ENCODE measurements at regions of chr3 and their contacts with region 1.

Region 1: DNA sequence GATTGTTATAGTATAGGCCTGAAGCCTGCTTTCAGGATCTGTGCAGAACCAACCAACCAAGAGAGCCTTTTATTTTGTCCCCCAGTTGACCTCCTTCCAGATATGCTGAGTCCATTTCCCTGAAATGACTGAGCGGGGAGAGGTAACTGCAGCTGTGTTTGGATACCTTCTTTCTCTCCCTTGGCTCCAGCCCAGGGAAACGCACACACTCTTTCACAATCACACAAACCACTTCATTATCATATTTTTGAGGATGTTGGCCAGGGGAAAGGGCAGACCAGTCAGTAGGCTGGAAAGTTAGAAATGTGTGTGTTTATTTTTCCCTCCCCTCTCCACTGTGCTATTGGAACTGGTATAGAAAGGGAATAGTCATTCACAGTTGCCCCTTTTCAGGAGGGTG is 417.7 kb upstream of the TBL1XR1 start:
- DNase-seq: peak; percentile 85
- H3K4me3 Mint-ChIP-seq: no peak overlapping the region
- H3K27ac Mint-ChIP-seq: peak overlapping the region; percentile 28
- H3K4me1 Mint-ChIP-seq: peaks cover 69% of the 10 kb centered on the region
- H3K27me3 Mint-ChIP-seq: no peaks in the 10 kb centered on the region
- CTCF ChIP-seq: no peak

Region 2: DNA sequence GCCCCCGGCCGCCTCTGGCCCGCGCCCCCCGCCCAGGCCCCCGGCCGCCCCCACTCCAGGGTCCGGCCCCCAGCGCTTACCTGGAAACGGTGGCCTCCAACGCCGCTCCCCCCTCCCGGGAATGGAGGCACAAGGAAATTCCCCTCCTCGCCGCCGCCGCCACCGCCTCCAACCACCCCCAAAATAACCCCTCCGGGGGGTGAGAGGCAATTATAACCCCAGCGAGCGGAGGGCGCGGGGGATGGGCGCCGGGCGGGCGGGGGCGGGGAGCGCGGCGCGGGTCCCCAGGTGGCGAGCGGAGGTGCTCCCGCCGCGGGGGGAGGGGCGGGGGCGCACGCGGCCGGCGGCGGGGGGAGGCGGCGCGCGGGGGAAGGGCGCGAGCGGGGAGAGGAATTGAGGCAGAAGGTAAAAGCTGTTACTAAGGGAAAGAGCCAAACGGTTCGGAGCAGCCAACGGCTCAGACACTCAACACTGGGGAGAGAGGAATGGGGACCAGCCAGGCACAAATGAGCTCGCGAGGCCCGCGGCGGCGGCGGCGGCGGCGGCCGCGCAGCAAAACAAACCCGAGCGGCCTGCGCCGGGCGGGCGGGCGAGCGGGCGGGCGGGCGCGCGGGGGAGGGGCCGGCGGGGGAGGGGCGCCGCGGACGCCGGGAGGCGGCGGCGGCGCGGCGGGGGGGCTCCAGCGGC is 417.8 kb before region 1 on chr3 and contains the start of gene TBL1XR1:
- CTCF ChIA-PET with region 1: interaction called, 3 read pairs
- intact Hi-C with region 1: loop called (anchors 5 kb)
- DNase-seq: peak; percentile 94
- H3K4me3 Mint-ChIP-seq: peak within 1 kb of the TSS; percentile 70
- H3K27ac Mint-ChIP-seq: peak within 1 kb of the TSS; percentile 71
- H3K4me1 Mint-ChIP-seq: peaks cover 32% of the 10 kb centered on the region
- H3K27me3 Mint-ChIP-seq: no peaks in the 10 kb centered on the region
- CTCF ChIP-seq: no peak
- total RNA-seq, gene TBL1XR1: 199 and 206 TPM in 2 replicates

Region 3: GRCh38 chr3:177478170-177478860 is 136.7 kb before region 1 on chr3:
- CTCF ChIA-PET with region 1: no interaction called
- intact Hi-C with region 1: loop called (anchors 5 kb)
- DNase-seq: peak; percentile 77
- H3K4me3 Mint-ChIP-seq: peak overlapping the region; percentile 16
- H3K27ac Mint-ChIP-seq: peak overlapping the region; percentile 4
- H3K4me1 Mint-ChIP-seq: peaks cover 39% of the 10 kb centered on the region
- H3K27me3 Mint-ChIP-seq: no peaks in the 10 kb centered on the region
- CTCF ChIP-seq: no peak

Region 4: GRCh38 chr3:177777699-177778098 is 162.7 kb after region 1 on chr3:
- CTCF ChIA-PET with region 1: interaction called, 5 read pairs
- intact Hi-C with region 1: loop called (anchors 2 kb)
- DNase-seq: peak; percentile 75
- H3K4me3 Mint-ChIP-seq: no peak overlapping the region
- H3K27ac Mint-ChIP-seq: no peak overlapping the region
- H3K4me1 Mint-ChIP-seq: peaks cover 12% of the 10 kb centered on the region
- H3K27me3 Mint-ChIP-seq: no peaks in the 10 kb centered on the region
- CTCF ChIP-seq: peak; percentile 95

Region 5: DNA sequence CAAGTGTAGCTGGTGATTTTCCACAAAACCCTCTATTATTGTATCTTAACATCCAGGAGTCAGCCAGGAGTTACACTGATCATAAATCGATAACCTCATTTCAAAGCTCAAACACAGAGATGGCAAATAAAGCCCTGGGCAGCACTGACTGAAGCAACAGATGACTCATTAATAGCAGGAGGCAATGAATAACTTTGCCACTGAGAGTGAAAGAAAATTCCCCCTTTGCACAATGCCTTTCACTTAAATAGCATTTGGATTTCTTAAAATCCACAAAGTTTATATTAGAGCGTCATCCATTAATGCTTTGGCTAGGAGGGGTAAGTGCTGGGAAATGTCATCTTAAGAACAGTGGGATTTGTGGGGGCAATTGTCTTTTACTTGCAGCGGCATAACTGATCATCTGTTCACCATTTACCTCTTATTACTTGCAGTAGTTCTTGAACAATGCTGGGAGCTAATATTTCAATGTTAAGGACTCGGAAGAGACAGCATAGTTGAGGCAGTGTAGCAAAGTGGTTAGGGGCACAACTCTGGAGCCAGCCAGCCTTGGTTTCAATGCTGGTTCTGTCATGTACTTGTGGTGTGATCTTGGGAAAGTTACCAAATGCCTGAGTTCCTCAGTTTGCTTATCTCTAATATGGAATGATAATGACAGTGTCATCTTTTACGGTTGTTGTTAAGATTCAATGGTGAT is 212.6 kb after region 1 on chr3:
- CTCF ChIA-PET with region 1: no interaction called
- intact Hi-C with region 1: loop called (anchors 5 kb)
- DNase-seq: peak; percentile 68
- H3K4me3 Mint-ChIP-seq: peak overlapping the region; percentile 48
- H3K27ac Mint-ChIP-seq: peak overlapping the region; percentile 85
- H3K4me1 Mint-ChIP-seq: peaks cover 77% of the 10 kb centered on the region
- H3K27me3 Mint-ChIP-seq: no peaks in the 10 kb centered on the region
- CTCF ChIP-seq: no peak